ENCODE measurements at regions of chr9 and their contacts with region 1.

Region 1: GRCh38 chr9:92369075-92369474 is 35.3 kb downstream of the OGN start:
- DNase-seq: no peak
- H3K4me3 ChIP-seq: no peak overlapping the region
- CTCF ChIP-seq: no peak
- POLR2A ChIP-seq: no peak

Region 2: GRCh38 chr9:92308893-92309292 is 60.2 kb before region 1 on chr9:
- intact Hi-C with region 1: no loop called
- DNase-seq: no peak
- H3K4me3 ChIP-seq: no peak overlapping the region
- CTCF ChIP-seq: no peak
- POLR2A ChIP-seq: no peak

Region 3: DNA sequence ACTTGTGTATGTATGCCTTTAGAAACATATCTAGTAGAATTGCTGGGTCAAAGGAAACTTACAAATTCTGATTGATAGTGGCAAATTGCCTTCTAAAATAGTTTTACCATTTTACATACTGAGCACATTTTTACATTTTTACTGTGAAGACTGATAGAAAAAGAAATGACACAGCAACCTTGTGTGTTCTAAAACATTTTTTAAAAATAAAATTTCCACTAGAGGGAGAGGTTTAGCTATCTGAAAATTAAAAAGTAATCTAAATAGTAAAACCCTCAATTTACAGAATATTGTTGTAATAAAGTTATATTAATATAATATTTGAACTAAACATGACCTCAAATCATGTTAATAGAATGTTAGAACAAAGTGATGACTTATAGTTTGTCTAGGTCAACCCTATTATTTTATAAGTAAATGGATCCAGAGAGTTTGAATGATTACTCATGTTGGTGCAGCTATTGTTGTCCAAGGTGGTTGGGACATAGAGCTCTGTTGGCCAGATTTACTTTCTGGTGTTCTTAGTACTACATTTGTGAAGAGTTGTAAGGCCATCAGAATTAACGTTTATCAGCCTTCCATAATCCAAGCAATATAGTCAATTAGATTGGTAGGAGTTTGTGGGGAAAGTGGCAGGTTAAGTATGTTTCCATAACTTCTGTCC is 26.1 kb before region 1 on chr9:
- intact Hi-C with region 1: loop called (anchors 1 kb)
- DNase-seq: no peak
- H3K4me3 ChIP-seq: no peak overlapping the region
- CTCF ChIP-seq: no peak
- POLR2A ChIP-seq: no peak

Measured in lower leg skin (tissue), 4 donors.